IMR-90 (cell line): ENCODE measurements at regions of chr3 and their contacts with region 1.

Region 1: DNA sequence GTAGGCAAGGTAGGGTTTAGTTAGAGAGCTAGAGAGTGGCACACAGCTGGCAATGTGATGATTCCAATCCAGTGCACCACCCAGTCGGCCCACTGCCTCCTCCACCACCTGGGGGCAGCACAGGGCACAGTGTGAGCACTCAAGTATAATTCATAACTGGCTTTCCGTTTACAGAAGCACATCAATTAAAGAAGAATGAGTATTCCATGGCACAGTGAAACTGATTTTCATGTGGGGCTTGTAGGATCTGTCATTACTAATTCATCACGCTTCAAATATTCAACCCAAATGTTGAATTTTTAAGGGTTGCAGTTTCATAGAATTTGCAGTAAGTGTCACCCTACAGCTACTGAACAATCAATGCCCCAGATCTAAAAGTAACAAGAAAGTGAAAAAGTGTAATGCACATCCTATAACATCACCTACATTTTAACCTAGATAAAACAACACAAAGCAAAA is 149.9 kb downstream of the IGSF11 start:
- DNase-seq: peak; percentile 33
- ATAC-seq: peak; percentile 93
- H3K4me3 ChIP-seq: no peak overlapping the region
- H3K27ac ChIP-seq: no peak overlapping the region
- H3K4me1 ChIP-seq: no peaks in the 10 kb centered on the region
- H3K27me3 ChIP-seq: no peaks in the 10 kb centered on the region; the same call in 1 of the 2 replicates
- CTCF ChIP-seq: peak; percentile 70
- POLR2A ChIP-seq: no peak
- RAD21 ChIP-seq: peak; percentile 54

Region 2: DNA sequence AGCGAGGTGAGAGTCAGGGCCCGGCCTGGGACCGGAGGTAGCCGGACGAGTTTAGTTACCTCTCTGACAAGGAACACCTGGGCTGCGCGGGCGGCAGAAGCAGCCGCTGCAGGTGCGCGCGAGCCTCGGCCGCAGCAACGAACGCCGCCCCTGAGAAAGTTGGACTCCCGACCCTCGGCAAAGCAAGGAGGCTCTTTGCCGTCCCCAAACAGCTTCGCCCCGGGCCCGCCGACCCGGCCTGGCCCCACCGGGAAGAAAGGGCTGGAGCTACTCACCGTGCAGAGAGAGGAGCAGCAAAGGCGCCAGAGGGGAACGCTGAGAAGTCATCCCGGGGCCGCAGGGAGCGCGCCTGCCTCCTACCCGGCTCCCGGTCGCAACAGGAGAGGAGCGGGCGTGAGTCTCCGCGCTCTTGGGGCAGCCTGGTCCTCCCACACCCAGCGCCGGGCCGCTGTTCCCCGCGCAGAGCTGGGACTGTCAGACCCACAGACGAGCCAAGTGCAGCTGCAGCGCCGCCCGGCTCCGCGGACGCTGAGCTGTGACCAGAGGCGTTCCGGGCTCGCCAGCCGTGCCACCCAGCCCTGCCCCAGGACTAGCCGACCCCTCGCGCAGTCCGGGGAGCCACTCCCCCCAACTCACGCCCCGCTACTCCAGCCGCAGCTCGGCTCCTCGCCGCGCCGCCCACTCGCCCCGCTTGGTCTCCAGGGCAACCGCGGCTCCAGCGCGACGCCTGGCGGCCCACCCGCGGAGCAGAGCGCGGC is 149.7 kb after region 1 on chr3 and contains the start of gene IGSF11:
- CTCF ChIA-PET with region 1: interaction called, 29 read pairs
- POLR2A ChIA-PET with region 1: no interaction called
- dilution Hi-C with region 1: no loop called
- in situ Hi-C with region 1: no loop called
- intact Hi-C with region 1: loop called (anchors 2 kb)
- DNase-seq: peak; percentile 20
- ATAC-seq: peak; percentile 96
- H3K4me3 ChIP-seq: peak within 1 kb of the TSS; percentile 65
- H3K27ac ChIP-seq: no peak within 1 kb of the TSS
- H3K4me1 ChIP-seq: no peaks in the 10 kb centered on the region
- H3K27me3 ChIP-seq: peaks cover 17% of the 10 kb centered on the region
- CTCF ChIP-seq: peak; percentile 54
- POLR2A ChIP-seq: no peak
- RAD21 ChIP-seq: peak; percentile 8; the same call in 1 of the 2 replicates
- total RNA-seq, gene IGSF11: 0.18 TPM in 1 of 2 replicates, not detected in the other

Region 3: DNA sequence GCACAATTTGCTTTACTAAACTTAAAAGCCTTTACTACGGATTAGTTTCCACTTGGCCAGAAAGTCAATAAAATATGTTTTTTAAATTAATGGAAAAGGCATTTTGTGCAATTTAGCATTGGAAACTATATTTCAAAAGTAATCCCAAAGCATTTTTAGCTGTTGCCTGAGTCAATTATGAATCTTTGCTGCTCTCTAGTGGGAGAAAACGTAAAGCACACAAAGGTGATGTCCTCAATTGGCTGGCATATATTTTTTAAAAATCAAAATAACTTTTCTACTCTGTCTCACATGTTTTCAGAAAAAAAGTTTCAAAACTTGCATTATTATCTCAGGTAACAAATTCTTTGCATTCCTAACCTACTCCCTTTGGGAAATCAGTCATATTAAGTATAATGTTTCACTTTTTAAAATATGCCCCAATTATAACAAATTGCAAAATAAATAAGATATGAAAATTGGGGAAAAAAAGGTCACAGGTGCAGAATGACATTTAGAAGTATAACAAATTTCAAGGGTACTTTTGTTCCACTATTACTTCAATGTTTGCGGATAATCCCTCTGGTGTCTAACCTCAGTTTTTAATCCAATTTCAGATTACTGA is 213.9 kb after region 1 on chr3:
- CTCF ChIA-PET with region 1: interaction called, 18 read pairs
- POLR2A ChIA-PET with region 1: interaction called, 4 read pairs
- dilution Hi-C with region 1: no loop called
- in situ Hi-C with region 1: loop called (anchors 5 kb)
- intact Hi-C with region 1: loop called (anchors 1 kb)
- DNase-seq: peak; percentile 40
- ATAC-seq: peak; percentile 42; the same call in 1 of the 2 replicates
- H3K4me3 ChIP-seq: no peak overlapping the region
- H3K27ac ChIP-seq: no peak overlapping the region
- H3K4me1 ChIP-seq: no peaks in the 10 kb centered on the region
- H3K27me3 ChIP-seq: no peaks in the 10 kb centered on the region
- CTCF ChIP-seq: peak; percentile 86
- POLR2A ChIP-seq: no peak
- RAD21 ChIP-seq: peak; percentile 80

Region 4: DNA sequence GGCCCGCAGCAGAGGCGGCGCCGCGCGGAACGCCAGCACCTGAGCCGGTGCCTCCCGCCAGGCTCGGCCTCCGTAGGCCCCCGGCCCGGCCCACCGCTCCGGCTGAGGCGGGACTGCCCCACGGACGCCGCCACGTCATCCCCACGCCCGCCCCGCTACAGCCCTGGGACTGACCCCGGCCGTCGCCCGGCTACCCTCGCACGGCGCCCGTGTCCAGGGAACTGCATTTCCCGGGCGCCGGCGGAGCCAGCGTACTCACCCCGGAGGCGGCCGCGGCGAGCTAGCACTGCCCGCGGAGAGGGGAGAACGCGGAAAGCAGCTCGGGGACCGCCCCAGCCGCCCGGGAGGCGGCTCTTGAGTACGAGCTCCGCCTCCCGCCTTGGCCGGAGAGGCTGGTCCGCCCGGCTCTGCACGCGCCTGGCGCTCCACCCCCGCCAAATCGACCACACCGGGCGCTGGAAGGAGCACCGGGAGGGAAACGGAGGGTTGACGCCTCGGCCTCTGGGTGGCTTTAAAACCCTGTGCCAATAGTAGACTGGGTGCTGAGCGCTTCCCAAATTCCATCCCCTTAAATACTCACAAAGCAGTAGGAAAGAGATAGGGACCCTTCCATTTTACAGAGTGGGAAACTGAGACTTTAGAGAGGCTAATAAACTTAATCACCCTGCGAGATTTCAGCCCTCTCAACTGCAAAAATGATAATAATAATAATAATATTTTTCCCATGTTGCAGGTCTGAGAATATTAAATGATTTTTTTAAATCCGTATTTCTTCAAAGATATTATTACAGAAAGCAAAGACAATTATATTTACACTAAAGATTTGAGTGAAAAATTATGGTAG is 356.0 kb after region 1 on chr3 and contains the start of gene B4GALT4:
- CTCF ChIA-PET with region 1: interaction called, 12 read pairs
- POLR2A ChIA-PET with region 1: no interaction called
- dilution Hi-C with region 1: no loop called
- in situ Hi-C with region 1: no loop called
- intact Hi-C with region 1: loop called (anchors 1 kb)
- DNase-seq: peak; percentile 84
- ATAC-seq: peak; percentile 96
- H3K4me3 ChIP-seq: peak within 1 kb of the TSS; percentile 82
- H3K27ac ChIP-seq: peak within 1 kb of the TSS; percentile 84
- H3K4me1 ChIP-seq: peaks cover 2% of the 10 kb centered on the region; the same call in 1 of the 2 replicates
- H3K27me3 ChIP-seq: no peaks in the 10 kb centered on the region
- CTCF ChIP-seq: no peak
- POLR2A ChIP-seq: peak; percentile 95
- RAD21 ChIP-seq: no peak
- total RNA-seq, gene B4GALT4: 30.3 and 30.6 TPM in 2 replicates

Region 5: GRCh38 chr3:119257682-119258410 is 373.1 kb after region 1 on chr3:
- CTCF ChIA-PET with region 1: no interaction called
- POLR2A ChIA-PET with region 1: no interaction called
- dilution Hi-C with region 1: no loop called
- in situ Hi-C with region 1: loop called (anchors 10 kb)
- intact Hi-C with region 1: no loop called
- DNase-seq: peak; percentile 41
- ATAC-seq: peak; percentile 78
- H3K4me3 ChIP-seq: no peak overlapping the region
- H3K27ac ChIP-seq: no peak overlapping the region
- H3K4me1 ChIP-seq: no peaks in the 10 kb centered on the region
- H3K27me3 ChIP-seq: peaks cover 3% of the 10 kb centered on the region; the same call in 1 of the 2 replicates
- CTCF ChIP-seq: no peak
- POLR2A ChIP-seq: no peak
- RAD21 ChIP-seq: no peak

Region 6: GRCh38 chr3:119579366-119580165 is 694.8 kb after region 1 on chr3 and contains the start of gene ADPRH:
- CTCF ChIA-PET with region 1: no interaction called
- POLR2A ChIA-PET with region 1: no interaction called
- dilution Hi-C with region 1: no loop called
- in situ Hi-C with region 1: loop called (anchors 25 kb)
- intact Hi-C with region 1: no loop called
- DNase-seq: peak; percentile 17
- ATAC-seq: peak; percentile 88
- H3K4me3 ChIP-seq: peak within 1 kb of the TSS; percentile 39
- H3K27ac ChIP-seq: no peak within 1 kb of the TSS
- H3K4me1 ChIP-seq: no peaks in the 10 kb centered on the region
- H3K27me3 ChIP-seq: peaks cover 3% of the 10 kb centered on the region
- CTCF ChIP-seq: no peak
- POLR2A ChIP-seq: no peak
- RAD21 ChIP-seq: no peak
- total RNA-seq, gene ADPRH: under 0.01 TPM in 2 replicates